AG04450 (cell line): ENCODE measurements at regions of chr17 and their contacts with region 1.

Region 1: GRCh38 chr17:35170968-35171771 is 23.0 kb downstream of the SLC35G3 start:
- DNase-seq: no peak
- H3K4me3 ChIP-seq: no peak overlapping the region
- H3K27ac ChIP-seq: no peak overlapping the region
- H3K27me3 ChIP-seq: no peaks in the 10 kb centered on the region
- CTCF ChIP-seq: peak; percentile 27

Region 2: GRCh38 chr17:35529866-35530265 is 358.7 kb after region 1 on chr17:
- CTCF ChIA-PET with region 1: interaction called, 13 read pairs
- POLR2A ChIA-PET with region 1: no interaction called
- DNase-seq: no peak
- H3K4me3 ChIP-seq: no peak overlapping the region
- H3K27ac ChIP-seq: no peak overlapping the region
- H3K27me3 ChIP-seq: peaks cover 6% of the 10 kb centered on the region
- CTCF ChIP-seq: no peak